MCF 10A (cell line): ENCODE measurements at regions of chr10 and their contacts with region 1.

Region 1: DNA sequence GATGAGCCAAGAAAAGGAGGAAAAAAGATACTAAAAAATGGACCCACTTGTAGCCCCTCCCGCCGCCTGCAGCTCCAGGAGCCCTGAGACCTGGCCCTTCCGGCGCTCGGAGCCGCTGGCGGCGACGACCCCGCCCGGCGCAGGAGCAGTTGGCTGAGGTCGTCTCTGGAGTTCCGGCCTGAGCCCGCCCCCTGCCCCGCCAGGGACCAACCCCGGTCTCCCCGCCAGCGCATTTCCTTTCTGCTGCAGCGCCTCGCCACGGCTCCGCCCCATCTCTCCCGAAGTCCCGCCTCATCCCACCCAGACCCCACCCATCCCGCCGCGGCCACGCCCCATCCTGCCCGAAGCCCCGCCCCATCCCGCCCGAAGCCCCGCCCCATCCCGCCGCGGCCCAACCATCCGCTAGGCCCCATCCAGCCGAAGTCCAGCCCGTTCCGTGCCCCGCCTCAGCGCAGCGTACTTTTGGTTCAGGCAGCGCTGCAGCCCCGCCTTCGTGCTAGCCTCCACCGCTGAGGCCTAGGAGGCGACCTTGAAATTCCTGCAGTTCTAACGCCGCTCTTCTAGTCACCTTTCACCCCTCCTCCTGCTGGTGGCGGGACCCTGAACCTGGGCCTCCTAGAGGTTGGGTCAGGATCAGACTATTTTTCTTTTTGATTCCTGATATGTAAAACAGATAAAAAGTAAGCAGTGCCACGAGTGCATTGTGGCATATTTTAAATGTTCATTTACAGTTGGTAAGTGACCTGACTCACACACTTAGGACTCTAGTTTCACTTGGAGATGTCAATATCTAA is at the start of gene STN1:
- DNase-seq: peak; percentile 94
- H3K4me3 Mint-ChIP-seq: peak within 1 kb of the TSS; percentile 89
- H3K27ac Mint-ChIP-seq: peak within 1 kb of the TSS; percentile 71
- H3K4me1 Mint-ChIP-seq: no peaks in the 10 kb centered on the region
- H3K27me3 Mint-ChIP-seq: no peaks in the 10 kb centered on the region
- CTCF ChIP-seq: no peak
- total RNA-seq, gene STN1: 31.8 and 46.7 TPM in 2 replicates

Region 2: GRCh38 chr10:103759100-103759781 is 159.0 kb before region 1 on chr10:
- CTCF ChIA-PET with region 1: no interaction called
- POLR2A ChIA-PET with region 1: no interaction called
- intact Hi-C with region 1: no loop called
- DNase-seq: peak; percentile 63
- H3K4me3 Mint-ChIP-seq: no peak overlapping the region
- H3K27ac Mint-ChIP-seq: peak overlapping the region; percentile 92
- H3K4me1 Mint-ChIP-seq: peaks cover 41% of the 10 kb centered on the region
- H3K27me3 Mint-ChIP-seq: no peaks in the 10 kb centered on the region
- CTCF ChIP-seq: no peak

Region 3: GRCh38 chr10:103870516-103870915 is 47.7 kb before region 1 on chr10:
- CTCF ChIA-PET with region 1: no interaction called
- POLR2A ChIA-PET with region 1: interaction called, 14 read pairs
- intact Hi-C with region 1: no loop called
- DNase-seq: peak; percentile 97
- H3K4me3 Mint-ChIP-seq: peak overlapping the region; percentile 70
- H3K27ac Mint-ChIP-seq: peak overlapping the region; percentile 97
- H3K4me1 Mint-ChIP-seq: peaks cover 29% of the 10 kb centered on the region
- H3K27me3 Mint-ChIP-seq: no peaks in the 10 kb centered on the region
- CTCF ChIP-seq: no peak

Region 4: DNA sequence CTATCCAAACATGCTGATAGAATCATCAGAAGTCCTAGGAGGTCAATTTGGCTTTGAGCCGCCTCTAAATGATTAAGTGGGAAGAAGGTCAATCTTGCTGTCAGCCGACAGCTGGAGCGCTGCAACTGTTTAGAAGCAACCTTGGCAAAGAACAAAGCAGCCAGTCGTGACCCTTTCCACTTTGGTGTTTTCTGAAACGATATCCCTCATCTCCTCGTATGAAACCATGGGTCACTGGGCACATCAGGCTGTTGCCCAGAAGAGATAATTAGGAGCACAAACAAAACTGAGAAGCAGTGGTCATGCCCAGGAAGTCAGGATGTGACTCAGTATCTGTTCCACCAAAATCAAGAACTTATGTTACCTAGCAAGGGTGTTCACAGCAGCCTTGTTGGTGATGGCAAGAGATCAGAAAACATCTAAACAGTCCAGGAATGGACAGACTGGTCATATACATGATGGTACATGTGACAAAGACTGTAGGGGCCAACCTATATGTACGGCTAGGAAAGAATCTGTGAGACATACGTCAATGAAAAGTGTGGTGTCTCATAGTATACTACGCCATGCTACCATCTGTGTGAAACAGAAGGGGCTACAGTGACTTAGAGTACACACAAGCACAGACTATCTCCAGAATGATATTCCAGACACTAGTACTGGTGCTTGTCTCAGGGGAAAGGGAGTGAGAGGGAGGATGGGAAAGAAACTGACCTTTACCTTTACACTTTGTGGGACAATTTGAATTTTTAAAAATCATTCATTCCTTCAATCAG is 22.7 kb before region 1 on chr10:
- CTCF ChIA-PET with region 1: interaction called, 13 read pairs
- POLR2A ChIA-PET with region 1: interaction called, 85 read pairs
- intact Hi-C with region 1: no loop called
- DNase-seq: peak; percentile 60
- H3K4me3 Mint-ChIP-seq: no peak overlapping the region
- H3K27ac Mint-ChIP-seq: peak overlapping the region; percentile 91
- H3K4me1 Mint-ChIP-seq: peaks cover 39% of the 10 kb centered on the region
- H3K27me3 Mint-ChIP-seq: no peaks in the 10 kb centered on the region
- CTCF ChIP-seq: no peak

Region 5: GRCh38 chr10:103901299-103901698 is 17.0 kb before region 1 on chr10:
- CTCF ChIA-PET with region 1: interaction called, 13 read pairs
- POLR2A ChIA-PET with region 1: interaction called, 85 read pairs
- intact Hi-C with region 1: no loop called
- DNase-seq: no peak
- H3K4me3 Mint-ChIP-seq: no peak overlapping the region
- H3K27ac Mint-ChIP-seq: peak overlapping the region; percentile 87
- H3K4me1 Mint-ChIP-seq: peaks cover 16% of the 10 kb centered on the region
- H3K27me3 Mint-ChIP-seq: no peaks in the 10 kb centered on the region
- CTCF ChIP-seq: no peak

Region 6: GRCh38 chr10:103942866-103943265 is 24.6 kb after region 1 on chr10:
- CTCF ChIA-PET with region 1: no interaction called
- POLR2A ChIA-PET with region 1: interaction called, 16 read pairs
- intact Hi-C with region 1: no loop called
- DNase-seq: no peak
- H3K4me3 Mint-ChIP-seq: no peak overlapping the region
- H3K27ac Mint-ChIP-seq: peak overlapping the region; percentile 37
- H3K4me1 Mint-ChIP-seq: peaks cover 11% of the 10 kb centered on the region
- H3K27me3 Mint-ChIP-seq: no peaks in the 10 kb centered on the region
- CTCF ChIP-seq: no peak

Region 7: GRCh38 chr10:103958996-103959395 is 40.7 kb after region 1 on chr10:
- CTCF ChIA-PET with region 1: interaction called, 6 read pairs
- POLR2A ChIA-PET with region 1: interaction called, 14 read pairs
- intact Hi-C with region 1: no loop called
- DNase-seq: peak; percentile 18
- H3K4me3 Mint-ChIP-seq: no peak overlapping the region
- H3K27ac Mint-ChIP-seq: no peak overlapping the region
- H3K4me1 Mint-ChIP-seq: peaks cover 14% of the 10 kb centered on the region
- H3K27me3 Mint-ChIP-seq: no peaks in the 10 kb centered on the region
- CTCF ChIP-seq: no peak